Ovary (tissue), 10 donors: ENCODE measurements at regions of chr1 and their contacts with region 1.

Region 1: GRCh38 chr1:221192055-221192454 is 312.8 kb downstream of the HLX start:
- DNase-seq: no peak
- H3K4me3 ChIP-seq: no peak overlapping the region
- H3K27ac ChIP-seq: no peak overlapping the region
- H3K4me1 ChIP-seq: no peaks in the 10 kb centered on the region
- H3K27me3 ChIP-seq: no peaks in the 10 kb centered on the region
- CTCF ChIP-seq: no peak
- EP300 ChIP-seq: no peak
- POLR2A ChIP-seq: no peak

Region 2: GRCh38 chr1:221013691-221014660 is 178.1 kb before region 1 on chr1:
- intact Hi-C with region 1: loop called in 1 of 4 experiments (anchors 10 kb)
- DNase-seq: no peak
- H3K4me3 ChIP-seq: no peak overlapping the region
- H3K27ac ChIP-seq: no peak overlapping the region
- H3K4me1 ChIP-seq: no peaks in the 10 kb centered on the region
- H3K27me3 ChIP-seq: no peaks in the 10 kb centered on the region
- CTCF ChIP-seq: no peak
- EP300 ChIP-seq: no peak
- POLR2A ChIP-seq: no peak